ENCODE measurements at regions of chr20 and their contacts with region 1.

Region 1: GRCh38 chr20:48933017-48933766 is 11.7 kb downstream of the ARFGEF2 start:
- DNase-seq: no peak
- ATAC-seq: no peak
- H3K4me3 Mint-ChIP-seq: no peak overlapping the region
- H3K27ac Mint-ChIP-seq: peak overlapping the region in 4 of 10 donors; percentile 28 to 53 (median 43)
- H3K4me1 Mint-ChIP-seq: peaks cover 15 to 40% (median 28%) of the 10 kb centered on the region in 4 donors
- H3K27me3 Mint-ChIP-seq: no peaks in the 10 kb centered on the region

Region 2: DNA sequence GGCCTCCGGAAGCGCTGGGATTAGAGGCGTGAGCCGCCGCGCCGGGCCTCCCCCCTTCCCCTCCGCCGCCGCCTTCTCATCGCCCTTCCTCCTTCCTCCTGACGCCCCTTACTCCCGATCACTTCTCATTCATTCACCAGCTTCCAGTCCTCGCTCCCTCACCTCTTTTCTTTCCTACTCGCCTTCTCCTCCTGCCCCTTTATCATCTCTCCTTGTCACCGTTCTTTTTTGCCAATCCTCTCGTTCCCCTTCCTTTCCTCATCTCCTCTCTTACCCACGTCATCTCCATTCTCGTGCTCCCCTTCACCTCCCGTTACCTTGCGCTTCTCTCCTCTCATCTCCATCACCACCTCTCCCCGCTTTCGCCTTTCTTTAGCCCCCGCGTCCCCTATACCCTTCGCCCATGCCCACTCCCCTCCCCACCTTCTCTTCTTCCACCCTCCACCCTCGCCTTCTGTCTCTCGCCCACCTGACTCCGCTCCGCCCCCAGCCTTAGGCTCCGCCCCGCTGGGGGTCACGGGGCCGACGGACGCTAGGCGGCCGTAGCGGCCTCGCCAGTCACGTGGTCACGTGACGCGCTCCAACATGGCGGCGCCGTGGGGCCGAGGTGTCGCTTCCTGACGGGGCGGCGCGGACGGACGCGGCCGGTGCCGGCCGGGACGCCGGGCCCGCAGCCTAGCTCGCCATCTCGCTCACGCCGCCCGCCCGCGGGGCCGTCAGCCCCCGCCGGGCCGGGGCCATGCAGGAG is 11.9 kb before region 1 on chr20 and contains the start of gene ARFGEF2:
- POLR2A ChIA-PET with region 1: interaction called, 11 read pairs
- DNase-seq: peak; percentile 82 to 93 (median 88)
- ATAC-seq: peak; percentile 91 to 93
- H3K4me3 Mint-ChIP-seq: peak within 1 kb of the TSS; percentile 92 to 100 (median 98)
- H3K27ac Mint-ChIP-seq: peak within 1 kb of the TSS; percentile 95 to 100 (median 98)
- H3K4me1 Mint-ChIP-seq: peaks cover 28 to 60% (median 49%) of the 10 kb centered on the region in 4 donors
- H3K27me3 Mint-ChIP-seq: no peaks in the 10 kb centered on the region
- polyA plus RNA-seq, gene ARFGEF2: 9.4 to 12.5 (median 10.8) TPM

Region 3: GRCh38 chr20:48945851-48946514 is 12.8 kb after region 1 on chr20:
- POLR2A ChIA-PET with region 1: no interaction called
- DNase-seq: no peak
- ATAC-seq: no peak
- H3K4me3 Mint-ChIP-seq: no peak overlapping the region
- H3K27ac Mint-ChIP-seq: peak overlapping the region in 2 of 10 donors; percentile 18 to 52
- H3K4me1 Mint-ChIP-seq: peaks cover 0 to 18% (median 5%) of the 10 kb centered on the region in 4 donors
- H3K27me3 Mint-ChIP-seq: no peaks in the 10 kb centered on the region